Activated T-helper 2 cell treated with anti-CD3 and anti-CD28 coated beads, Interferon-gamma antibody, Interleukin-2, Interleukin-4, amounts not matched to agents 10 μg/mL and 5 μg/mL and 100 μg/mL, durations not matched to agents 14 hours and 24 hours and 36 hours (primary cell): ENCODE measurements at regions of chr4 and their contacts with region 1.

Region 1: DNA sequence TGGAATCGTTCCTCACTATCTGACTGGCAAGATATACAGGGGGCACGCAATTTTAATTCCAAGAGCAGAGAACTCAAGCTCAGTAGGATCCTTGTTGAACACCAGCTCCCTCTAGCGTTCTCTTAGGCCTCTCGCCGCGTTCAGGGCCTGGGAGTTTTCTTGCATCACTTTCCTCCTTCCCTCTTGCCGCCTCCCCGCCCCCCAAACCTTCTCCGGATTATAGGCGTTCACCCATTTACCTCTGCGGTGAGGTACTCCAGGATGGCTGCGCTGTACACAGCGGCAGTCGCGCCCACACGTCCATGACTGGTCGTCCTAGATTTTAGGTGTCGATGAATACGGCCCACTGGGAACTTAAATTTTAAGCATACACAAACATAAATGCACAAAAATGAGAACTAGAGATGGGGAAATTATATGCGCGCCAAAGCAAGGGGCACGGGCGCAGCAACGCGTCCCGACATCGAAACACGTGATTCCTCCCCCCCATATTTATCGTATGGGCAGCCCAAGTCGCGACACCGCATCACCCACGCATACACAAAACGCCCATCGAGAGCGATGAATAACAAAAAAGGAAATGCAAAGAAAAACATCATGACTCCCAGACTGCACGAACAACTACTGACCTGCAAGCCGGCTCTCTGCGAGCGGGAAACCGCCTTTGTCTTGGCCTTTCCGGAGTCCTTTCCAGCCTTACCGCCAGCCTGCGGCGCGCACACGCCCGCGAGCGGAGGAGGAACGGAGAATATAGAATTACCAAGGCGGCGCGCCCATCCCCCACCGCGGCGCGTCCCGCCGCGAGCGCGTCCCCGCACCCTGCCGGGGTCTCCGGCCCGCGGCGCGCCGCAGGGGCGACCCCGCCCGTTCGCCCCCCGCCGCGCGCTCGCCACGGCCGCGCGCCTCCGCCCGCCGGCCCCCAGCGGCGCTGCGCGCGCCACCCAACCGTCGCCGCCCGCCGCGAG is 759 bp downstream of the H2AZ1 start:
- DNase-seq: peak; percentile 87
- H3K4me3 Mint-ChIP-seq: no peak overlapping the region
- H3K27ac Mint-ChIP-seq: no peak overlapping the region
- H3K4me1 Mint-ChIP-seq: peaks cover 31% of the 10 kb centered on the region
- H3K27me3 Mint-ChIP-seq: no peaks in the 10 kb centered on the region

Region 2: GRCh38 chr4:99088481-99089365 is 860.6 kb before region 1 on chr4 and contains the start of gene ADH5:
- intact Hi-C with region 1: loop called (anchors 10 kb)
- DNase-seq: peak; percentile 80
- H3K4me3 Mint-ChIP-seq: peak within 1 kb of the TSS; percentile 95
- H3K27ac Mint-ChIP-seq: peak within 1 kb of the TSS; percentile 92
- H3K4me1 Mint-ChIP-seq: peaks cover 26% of the 10 kb centered on the region
- H3K27me3 Mint-ChIP-seq: peaks cover 4% of the 10 kb centered on the region
- total RNA-seq, gene ADH5: 93.8 and 98.6 TPM in 2 replicates

Region 3: DNA sequence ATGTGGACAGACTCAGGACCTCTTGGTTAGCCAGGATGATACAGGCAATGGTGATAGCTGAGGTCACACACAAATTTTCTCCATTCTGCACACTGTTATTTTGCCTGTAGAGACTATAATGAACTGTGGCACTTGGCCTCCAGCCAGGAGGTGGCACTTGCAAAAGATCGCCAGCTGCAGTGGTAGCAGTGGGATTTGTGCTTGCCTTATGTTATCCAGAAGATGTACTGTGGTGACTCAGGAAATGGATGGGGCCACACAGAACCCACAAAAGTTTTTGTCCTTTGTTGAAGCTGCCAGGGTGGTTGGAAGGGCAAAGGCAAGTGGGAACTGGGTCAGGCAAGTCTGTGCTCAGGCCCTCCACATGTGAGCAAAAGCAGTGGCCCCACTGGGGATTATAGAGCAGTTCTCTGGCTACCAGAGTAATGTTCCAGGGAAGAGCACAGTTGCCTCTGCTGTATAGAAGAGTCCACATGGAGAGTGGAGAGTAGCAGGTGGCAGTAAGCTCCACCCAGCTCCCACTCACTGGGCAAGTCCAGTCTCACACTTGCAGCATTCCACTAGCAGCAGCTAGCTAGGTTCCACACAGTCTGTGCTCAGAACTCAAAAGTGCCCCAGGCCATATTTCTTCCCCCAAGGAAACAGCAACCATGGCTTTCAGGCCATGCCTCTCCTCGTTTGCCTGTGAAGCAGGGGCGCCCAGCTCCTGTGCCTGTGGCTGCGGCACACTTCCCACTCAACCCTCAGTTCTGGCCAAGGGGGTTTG is 444.3 kb before region 1 on chr4:
- intact Hi-C with region 1: loop called (anchors 5 kb)
- DNase-seq: no peak
- H3K4me3 Mint-ChIP-seq: no peak overlapping the region
- H3K27ac Mint-ChIP-seq: no peak overlapping the region
- H3K4me1 Mint-ChIP-seq: peaks cover 32% of the 10 kb centered on the region
- H3K27me3 Mint-ChIP-seq: peaks cover 2% of the 10 kb centered on the region

Region 4: GRCh38 chr4:99808260-99808857 is 141.0 kb before region 1 on chr4:
- intact Hi-C with region 1: loop called (anchors 1 kb)
- DNase-seq: peak; percentile 61
- H3K4me3 Mint-ChIP-seq: no peak overlapping the region
- H3K27ac Mint-ChIP-seq: no peak overlapping the region
- H3K4me1 Mint-ChIP-seq: peaks cover 24% of the 10 kb centered on the region
- H3K27me3 Mint-ChIP-seq: peaks cover 10% of the 10 kb centered on the region

Region 5: GRCh38 chr4:99816545-99817308 is 132.6 kb before region 1 on chr4 and contains the start of gene DAPP1:
- intact Hi-C with region 1: loop called (anchors 1 kb)
- DNase-seq: peak; percentile 83
- H3K4me3 Mint-ChIP-seq: peak within 1 kb of the TSS; percentile 92
- H3K27ac Mint-ChIP-seq: peak within 1 kb of the TSS; percentile 94
- H3K4me1 Mint-ChIP-seq: peaks cover 73% of the 10 kb centered on the region
- H3K27me3 Mint-ChIP-seq: no peaks in the 10 kb centered on the region
- total RNA-seq, gene DAPP1: 21.4 and 23.6 TPM in 2 replicates

Region 6: GRCh38 chr4:99894161-99894997 is 54.9 kb before region 1 on chr4 and contains the start of gene LAMTOR3:
- intact Hi-C with region 1: loop called (anchors 1 kb)
- DNase-seq: peak; percentile 87
- H3K4me3 Mint-ChIP-seq: peak within 1 kb of the TSS; percentile 98
- H3K27ac Mint-ChIP-seq: peak within 1 kb of the TSS; percentile 95
- H3K4me1 Mint-ChIP-seq: peaks cover 27% of the 10 kb centered on the region
- H3K27me3 Mint-ChIP-seq: no peaks in the 10 kb centered on the region
- total RNA-seq, gene LAMTOR3: 27.1 and 28.8 TPM in 2 replicates